ENCODE measurements at regions of chr9 and their contacts with region 1.

Region 1: GRCh38 chr9:6512085-6512657 is 99.2 kb downstream of the UHRF2 start:
- DNase-seq: no peak

Region 2: DNA sequence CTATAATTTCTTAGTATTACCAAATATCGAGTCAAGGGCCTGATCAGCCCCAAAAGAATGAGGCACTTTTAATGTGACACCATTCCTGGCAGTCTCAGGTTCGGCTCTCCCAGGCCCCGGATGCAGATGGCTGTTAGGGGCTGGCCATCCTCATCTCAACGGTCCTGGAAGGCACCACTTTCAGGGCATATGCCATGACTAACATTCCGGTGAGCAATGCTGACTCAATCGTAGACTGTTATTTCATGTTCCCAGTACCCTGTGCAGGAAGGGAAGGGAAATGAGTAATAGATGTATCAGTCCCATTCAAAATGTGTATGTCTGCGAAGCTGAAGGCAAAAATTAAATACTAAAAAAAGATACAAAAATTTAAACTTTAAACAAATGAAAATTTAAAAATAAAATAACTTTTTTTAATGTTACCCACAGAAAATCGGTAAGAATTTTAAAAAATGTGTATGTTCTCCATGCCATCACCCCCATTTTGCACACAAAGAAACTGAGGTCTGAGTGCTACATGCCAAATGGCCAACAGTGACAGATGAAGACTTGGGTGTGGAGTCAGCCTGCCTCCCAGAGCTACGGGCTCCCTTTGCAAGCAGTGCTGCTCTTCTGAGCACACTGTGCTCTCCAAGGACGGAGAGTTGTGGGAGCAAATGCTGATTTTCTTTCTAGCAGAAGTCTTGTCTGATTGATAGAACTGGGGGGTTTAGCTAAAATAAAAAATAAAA is 54.4 kb after region 1 on chr9:
- intact Hi-C with region 1: loop called in 1 of 2 experiments (anchors 5 kb)
- DNase-seq: peak; percentile 88

Region 3: DNA sequence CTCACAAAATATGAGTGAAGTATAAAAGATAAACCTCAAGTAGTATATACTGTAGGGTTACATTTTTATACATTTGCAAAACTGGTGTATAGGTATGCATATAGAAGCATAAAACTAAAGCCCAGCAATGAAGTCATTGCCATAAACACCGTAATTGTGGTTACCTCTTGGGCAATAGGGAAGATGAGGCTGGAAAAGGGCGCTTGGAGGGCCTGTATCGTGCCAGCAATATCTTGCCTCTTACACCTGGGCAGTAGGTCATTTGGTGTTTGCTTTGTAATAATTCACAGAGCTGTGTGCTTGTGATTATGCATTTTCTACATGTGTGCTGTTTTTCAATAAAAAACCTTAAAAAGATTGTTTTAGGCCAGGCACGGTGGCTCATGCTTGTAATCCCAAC is 290.8 kb after region 1 on chr9:
- intact Hi-C with region 1: loop called in 1 of 2 experiments (anchors 5 kb)
- DNase-seq: no peak